ENCODE measurements at regions of chr19 and their contacts with region 1.

Region 1: DNA sequence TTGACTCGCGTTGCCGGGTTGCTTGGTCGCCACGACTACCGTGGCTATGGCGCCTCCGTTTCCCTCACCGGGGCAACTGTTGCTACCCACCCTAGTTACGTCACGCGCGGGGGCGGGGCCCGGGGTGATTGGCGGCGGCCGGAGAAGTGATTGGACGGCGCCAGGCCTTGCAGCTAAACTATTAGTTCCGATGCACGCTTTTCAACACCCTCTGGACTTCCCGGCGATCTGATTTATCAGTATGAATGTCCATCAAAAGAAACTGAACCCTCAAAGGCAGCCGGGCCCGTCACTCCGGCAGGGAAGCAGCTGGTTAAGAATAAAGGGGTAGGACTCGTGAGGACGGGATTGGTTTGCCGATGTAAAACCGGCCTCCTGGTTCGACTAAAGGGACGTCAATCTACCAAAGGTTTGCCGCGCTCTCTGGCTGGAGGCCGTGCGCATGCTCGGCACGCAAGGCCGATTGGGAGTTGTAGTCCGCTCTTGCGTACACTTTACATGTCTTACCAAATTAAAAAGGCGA is at the start of gene RFX1:
- DNase-seq: peak; percentile 100
- ATAC-seq: peak; percentile 84
- H3K4me3 Mint-ChIP-seq: peak within 1 kb of the TSS; percentile 94
- H3K27ac Mint-ChIP-seq: peak within 1 kb of the TSS; percentile 98
- H3K4me1 Mint-ChIP-seq: peaks cover 39% of the 10 kb centered on the region
- H3K27me3 Mint-ChIP-seq: no peaks in the 10 kb centered on the region
- total RNA-seq, gene RFX1: 14.2 to 15.3 TPM

Region 2: DNA sequence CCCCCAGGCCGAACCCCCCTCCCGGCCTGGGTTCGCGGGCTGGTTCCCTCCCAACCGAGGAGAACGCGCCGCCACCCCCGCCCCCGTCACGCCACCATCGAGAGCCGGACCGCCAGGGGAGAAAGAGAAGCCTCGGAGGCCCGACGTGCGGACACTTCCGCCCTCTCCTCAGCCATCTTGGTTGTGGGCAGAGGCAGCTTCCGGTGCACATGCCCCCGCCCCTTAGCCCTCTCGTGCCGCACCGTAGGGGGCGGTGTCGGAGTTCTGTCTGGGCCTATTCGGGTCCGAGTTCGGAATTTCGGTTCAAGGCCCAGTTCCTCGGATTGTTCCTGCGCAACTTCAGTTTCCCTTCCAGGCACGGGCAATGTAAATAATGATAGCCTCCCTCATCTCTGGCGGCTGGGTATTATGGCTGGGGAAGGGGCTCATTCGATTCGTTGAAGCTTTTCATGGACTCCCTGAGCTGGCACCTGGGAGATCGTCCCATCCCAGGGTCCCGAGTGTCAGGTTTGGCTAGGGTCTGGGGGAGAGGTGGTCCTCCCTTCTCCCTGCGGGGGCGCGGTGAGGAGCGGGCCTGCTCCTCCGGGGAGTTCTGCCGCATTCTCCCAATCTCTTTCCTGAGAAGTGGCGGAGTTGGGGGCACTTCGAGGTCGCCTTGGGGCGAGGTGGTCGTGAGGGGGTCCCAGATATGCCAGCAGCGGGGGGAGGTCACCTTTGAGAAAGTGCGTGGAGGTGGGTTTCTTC is 855.9 kb before region 1 on chr19 and contains the starts of genes IER2 and STX10:
- CTCF ChIA-PET with region 1: no interaction called
- POLR2A ChIA-PET with region 1: no interaction called
- intact Hi-C with region 1: loop called in 1 of 2 experiments (anchors 1 kb)
- DNase-seq: peak; percentile 96
- ATAC-seq: peak; percentile 52
- H3K4me3 Mint-ChIP-seq: peak within 1 kb of the TSS; percentile 87
- H3K27ac Mint-ChIP-seq: peak within 1 kb of the TSS; percentile 97
- H3K4me1 Mint-ChIP-seq: peaks cover 18% of the 10 kb centered on the region
- H3K27me3 Mint-ChIP-seq: no peaks in the 10 kb centered on the region
- total RNA-seq, gene IER2: 109 to 118 TPM
- total RNA-seq, gene STX10: 64.8 to 71.4 TPM

Region 3: GRCh38 chr19:13839130-13839937 is 167.0 kb before region 1 on chr19:
- CTCF ChIA-PET with region 1: no interaction called
- POLR2A ChIA-PET with region 1: no interaction called
- intact Hi-C with region 1: loop called in 1 of 2 experiments (anchors 2 kb)
- DNase-seq: peak; percentile 96
- ATAC-seq: peak; percentile 68
- H3K4me3 Mint-ChIP-seq: peak overlapping the region; percentile 94
- H3K27ac Mint-ChIP-seq: peak overlapping the region; percentile 95
- H3K4me1 Mint-ChIP-seq: peaks cover 54% of the 10 kb centered on the region
- H3K27me3 Mint-ChIP-seq: no peaks in the 10 kb centered on the region

Region 4: GRCh38 chr19:13920940-13921761 is 85.2 kb before region 1 on chr19:
- CTCF ChIA-PET with region 1: no interaction called
- POLR2A ChIA-PET with region 1: no interaction called
- intact Hi-C with region 1: loop called in 1 of 2 experiments (anchors 1 kb)
- DNase-seq: peak; percentile 61
- ATAC-seq: peak; percentile 94
- H3K4me3 Mint-ChIP-seq: no peak overlapping the region
- H3K27ac Mint-ChIP-seq: peak overlapping the region; percentile 19
- H3K4me1 Mint-ChIP-seq: no peaks in the 10 kb centered on the region
- H3K27me3 Mint-ChIP-seq: no peaks in the 10 kb centered on the region

Region 5: DNA sequence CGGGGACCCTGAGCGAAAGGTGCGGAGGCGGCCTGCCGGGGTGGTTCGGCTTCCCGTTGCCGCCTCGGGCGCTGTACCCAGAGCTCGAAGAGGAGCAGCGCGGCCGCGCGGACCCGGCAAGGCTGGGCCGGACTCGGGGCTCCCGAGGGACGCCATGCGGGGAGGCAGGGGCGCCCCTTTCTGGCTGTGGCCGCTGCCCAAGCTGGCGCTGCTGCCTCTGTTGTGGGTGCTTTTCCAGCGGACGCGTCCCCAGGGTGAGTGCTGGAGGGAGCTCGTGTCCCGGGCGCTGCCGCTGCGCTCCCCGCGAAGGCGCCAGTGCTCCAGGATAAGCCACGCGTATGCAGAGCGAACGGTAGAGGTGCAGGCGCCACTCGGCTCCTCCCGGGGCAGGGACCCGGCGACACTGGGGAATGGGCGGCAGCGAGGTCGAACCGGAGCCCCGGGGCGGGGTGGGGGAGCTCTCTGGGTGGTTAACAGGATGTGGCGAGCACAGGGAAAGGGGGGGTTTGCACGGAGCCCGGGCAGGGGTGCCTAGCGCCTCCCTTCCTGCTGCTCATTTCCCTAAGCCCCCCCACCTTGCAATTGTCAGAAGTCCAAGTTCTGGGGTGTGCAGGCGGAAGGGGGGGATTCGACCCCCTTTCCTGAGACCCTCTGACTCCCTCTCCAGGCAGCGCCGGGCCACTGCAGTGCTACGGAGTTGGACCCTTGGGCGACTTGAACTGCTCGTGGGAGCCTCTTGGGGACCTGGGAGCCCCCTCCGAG is 25.6 kb after region 1 on chr19 and contains the start of gene IL27RA:
- CTCF ChIA-PET with region 1: interaction called, 3 read pairs
- POLR2A ChIA-PET with region 1: interaction called, 5 read pairs
- intact Hi-C with region 1: loop called in 1 of 2 experiments (anchors 1 kb)
- DNase-seq: peak; percentile 83
- ATAC-seq: peak; percentile 79
- H3K4me3 Mint-ChIP-seq: peak within 1 kb of the TSS; percentile 92
- H3K27ac Mint-ChIP-seq: peak within 1 kb of the TSS; percentile 90
- H3K4me1 Mint-ChIP-seq: peaks cover 18% of the 10 kb centered on the region
- H3K27me3 Mint-ChIP-seq: no peaks in the 10 kb centered on the region
- total RNA-seq, gene IL27RA: 49.8 to 52.0 TPM

Region 6: DNA sequence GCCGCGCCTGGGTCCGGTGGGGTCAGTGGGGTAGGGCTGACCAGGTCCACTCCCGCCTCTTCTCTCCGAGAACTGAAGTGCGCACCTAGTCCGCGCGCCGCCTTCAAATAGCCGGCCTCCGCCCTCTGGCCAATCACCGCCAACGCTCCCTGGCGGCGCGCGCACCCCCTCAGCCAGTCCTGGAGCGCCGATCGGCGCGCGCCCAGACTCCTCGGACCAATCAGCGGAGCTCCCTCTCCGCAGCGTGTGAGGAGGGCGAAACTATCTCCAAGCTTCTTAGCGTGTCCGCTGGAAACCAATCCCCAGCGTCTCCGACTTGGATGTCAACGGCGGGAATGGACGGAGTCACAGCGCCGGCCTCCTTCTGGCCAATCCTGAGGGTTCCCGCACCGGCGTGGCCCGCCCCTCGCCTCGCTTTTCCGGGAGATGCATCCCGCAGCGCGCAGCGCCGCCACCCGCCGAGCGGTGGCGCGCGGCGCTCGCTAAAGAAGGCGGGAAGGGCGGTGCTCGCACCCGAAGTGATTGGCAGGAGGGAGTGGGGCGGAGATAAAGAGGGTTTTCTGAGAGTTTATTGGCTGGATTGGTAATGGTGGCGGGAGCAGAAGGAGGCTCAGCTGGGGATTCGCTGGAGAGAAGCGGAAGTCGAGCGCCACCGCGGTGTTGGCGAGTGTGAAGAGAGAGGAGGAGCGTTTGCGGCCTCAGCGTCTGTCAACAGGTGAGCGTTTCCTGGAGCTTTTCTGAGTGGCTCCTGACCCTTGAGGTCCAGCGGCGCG is 130.4 kb after region 1 on chr19 and contains the start of gene ASF1B:
- CTCF ChIA-PET with region 1: no interaction called
- POLR2A ChIA-PET with region 1: no interaction called
- intact Hi-C with region 1: loop called in 1 of 2 experiments (anchors 1 kb)
- DNase-seq: peak; percentile 99
- ATAC-seq: peak; percentile 88
- H3K4me3 Mint-ChIP-seq: peak within 1 kb of the TSS; percentile 88
- H3K27ac Mint-ChIP-seq: peak within 1 kb of the TSS; percentile 93
- H3K4me1 Mint-ChIP-seq: peaks cover 43% of the 10 kb centered on the region
- H3K27me3 Mint-ChIP-seq: no peaks in the 10 kb centered on the region
- total RNA-seq, gene ASF1B: 64.6 to 70.4 TPM

Region 7: DNA sequence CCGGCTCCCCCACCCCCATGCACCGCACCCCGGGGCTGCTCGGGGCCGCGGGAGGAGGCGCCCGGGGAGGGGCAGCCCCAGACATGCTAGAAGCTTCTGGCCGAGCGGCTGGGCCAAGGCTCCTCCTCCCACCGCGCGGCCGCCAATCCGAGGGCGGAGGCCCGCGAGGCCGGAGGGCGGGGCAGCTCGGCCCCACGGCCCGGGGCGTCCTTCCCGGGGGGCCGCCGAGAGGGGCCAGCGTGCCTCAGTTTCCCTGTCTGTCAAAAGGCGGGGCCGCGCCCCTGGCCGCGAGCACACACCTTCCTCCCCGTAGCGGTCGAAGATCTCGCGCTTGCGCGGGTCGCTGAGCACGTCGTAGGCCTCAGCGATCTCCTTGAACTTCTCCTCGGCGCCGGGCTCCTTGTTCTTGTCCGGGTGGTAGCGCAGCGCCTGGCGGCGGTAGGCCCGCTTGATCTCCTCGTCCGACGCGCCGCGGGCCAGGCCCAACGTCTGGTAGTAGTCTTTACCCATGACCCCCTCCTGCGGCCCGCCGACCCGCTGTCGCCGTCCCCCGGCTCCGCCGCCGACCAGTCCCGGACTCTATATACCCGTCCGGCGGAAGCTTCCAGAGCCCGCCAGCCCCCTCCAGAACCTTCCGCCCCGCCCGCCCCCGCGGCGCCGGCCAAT is 511.7 kb after region 1 on chr19 and contains the start of gene DNAJB1:
- CTCF ChIA-PET with region 1: no interaction called
- POLR2A ChIA-PET with region 1: no interaction called
- intact Hi-C with region 1: loop called in 1 of 2 experiments (anchors 1 kb)
- DNase-seq: peak; percentile 81
- ATAC-seq: peak; percentile 56
- H3K4me3 Mint-ChIP-seq: peak within 1 kb of the TSS; percentile 94
- H3K27ac Mint-ChIP-seq: peak within 1 kb of the TSS; percentile 94
- H3K4me1 Mint-ChIP-seq: peaks cover 60% of the 10 kb centered on the region
- H3K27me3 Mint-ChIP-seq: no peaks in the 10 kb centered on the region
- total RNA-seq, gene DNAJB1: 69.3 to 72.6 TPM